Tibial artery (tissue), 4 donors: ENCODE measurements at regions of chr2 and their contacts with region 1.

Region 1: DNA sequence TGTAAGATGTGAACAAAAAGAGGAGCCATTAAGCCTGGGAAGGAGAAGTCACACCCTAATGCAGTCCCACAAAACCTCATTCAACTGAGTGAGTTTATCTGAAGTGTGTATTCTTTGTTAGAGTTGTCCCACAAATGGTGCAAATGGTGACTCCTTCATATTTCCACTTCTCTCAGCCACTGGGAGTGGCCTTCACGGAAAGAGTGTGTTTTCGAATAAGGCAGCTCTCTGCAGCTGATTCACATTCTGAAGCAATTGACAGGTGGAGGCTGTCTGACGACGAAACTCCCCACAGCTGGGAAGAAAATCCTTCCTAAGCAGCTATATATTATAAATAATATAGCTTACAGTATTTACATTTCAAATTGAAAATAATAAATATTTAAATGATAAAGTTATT is 318.8 kb upstream of the TMEFF2 start:
- DNase-seq: no peak
- H3K4me3 ChIP-seq: no peak overlapping the region
- H3K27ac ChIP-seq: no peak overlapping the region
- H3K4me1 ChIP-seq: no peaks in the 10 kb centered on the region
- H3K27me3 ChIP-seq: no peaks in the 10 kb centered on the region
- CTCF ChIP-seq: no peak

Region 2: DNA sequence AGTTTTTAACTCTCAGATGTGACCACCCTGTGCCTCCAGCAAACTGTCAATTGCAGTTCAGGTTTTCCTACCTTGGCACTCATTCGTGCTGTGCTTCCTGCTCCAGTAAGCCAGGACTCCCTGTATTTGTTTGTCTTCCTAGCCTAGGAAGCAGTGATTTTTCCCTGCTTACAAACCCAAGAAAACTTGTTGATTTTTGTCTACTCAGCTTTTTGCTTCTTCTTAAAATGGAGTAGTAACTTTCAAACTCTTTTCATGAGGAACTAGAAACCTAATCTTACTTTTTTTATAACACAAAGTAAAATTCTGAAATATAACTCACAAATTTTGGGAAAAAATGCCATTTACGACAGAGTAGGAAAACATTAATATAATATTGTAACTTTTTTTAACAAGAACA is 168.3 kb before region 1 on chr2:
- intact Hi-C with region 1: no loop called
- DNase-seq: no peak
- H3K4me3 ChIP-seq: no peak overlapping the region
- H3K27ac ChIP-seq: no peak overlapping the region
- H3K4me1 ChIP-seq: no peaks in the 10 kb centered on the region
- H3K27me3 ChIP-seq: no peaks in the 10 kb centered on the region
- CTCF ChIP-seq: no peak

Region 3: GRCh38 chr2:192369969-192370368 is 143.6 kb before region 1 on chr2:
- intact Hi-C with region 1: no loop called
- DNase-seq: no peak
- H3K4me3 ChIP-seq: no peak overlapping the region
- H3K27ac ChIP-seq: no peak overlapping the region
- H3K4me1 ChIP-seq: no peaks in the 10 kb centered on the region
- H3K27me3 ChIP-seq: no peaks in the 10 kb centered on the region
- CTCF ChIP-seq: no peak

Region 4: DNA sequence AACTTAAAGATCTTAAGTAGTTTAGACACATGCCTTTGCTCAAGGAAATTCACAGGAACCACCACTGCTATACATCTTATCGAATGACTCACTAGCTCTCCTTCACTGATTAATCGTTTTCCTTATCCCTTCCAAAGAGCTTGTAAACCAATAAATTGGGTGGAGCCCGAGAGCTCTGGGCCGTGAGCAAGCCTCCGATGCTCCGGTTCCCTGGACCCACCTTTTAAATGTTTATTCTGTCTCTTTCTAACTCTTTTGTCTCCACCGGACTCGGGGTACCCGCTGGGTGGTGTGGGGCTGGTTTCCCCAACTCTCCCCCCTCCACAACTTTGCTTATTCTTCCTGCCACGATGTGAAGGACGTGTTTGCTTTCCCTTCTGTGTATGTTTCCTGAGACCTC is 25.9 kb before region 1 on chr2:
- intact Hi-C with region 1: loop called (anchors 1 kb)
- DNase-seq: no peak
- H3K4me3 ChIP-seq: no peak overlapping the region
- H3K27ac ChIP-seq: no peak overlapping the region
- H3K4me1 ChIP-seq: no peaks in the 10 kb centered on the region
- H3K27me3 ChIP-seq: no peaks in the 10 kb centered on the region
- CTCF ChIP-seq: no peak

Region 5: DNA sequence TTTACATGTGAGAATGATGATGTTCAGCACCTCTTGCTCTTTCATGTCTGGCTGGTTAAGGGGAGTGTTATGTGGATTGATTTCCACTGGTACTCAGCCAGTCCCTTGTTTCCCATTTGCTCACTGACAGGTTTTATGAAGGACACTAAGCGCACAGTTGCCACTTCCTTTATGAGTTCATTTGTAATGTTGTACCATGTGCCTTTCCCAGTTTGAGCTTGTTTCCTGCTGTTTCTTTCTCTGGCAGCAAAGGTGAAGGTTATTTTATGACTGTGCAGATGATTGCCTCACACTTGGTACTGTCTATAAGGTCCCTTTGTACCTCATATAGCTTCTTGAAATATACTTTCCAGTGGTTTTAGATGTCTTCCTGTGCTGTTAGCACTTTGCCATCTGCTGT is 1381.7 kb after region 1 on chr2:
- intact Hi-C with region 1: no loop called
- DNase-seq: no peak
- H3K4me3 ChIP-seq: no peak overlapping the region
- H3K27ac ChIP-seq: no peak overlapping the region
- H3K4me1 ChIP-seq: no peaks in the 10 kb centered on the region
- H3K27me3 ChIP-seq: no peaks in the 10 kb centered on the region
- CTCF ChIP-seq: no peak